Ovary (tissue), 10 donors: ENCODE measurements at regions of chr3 and their contacts with region 1.

Region 1: DNA sequence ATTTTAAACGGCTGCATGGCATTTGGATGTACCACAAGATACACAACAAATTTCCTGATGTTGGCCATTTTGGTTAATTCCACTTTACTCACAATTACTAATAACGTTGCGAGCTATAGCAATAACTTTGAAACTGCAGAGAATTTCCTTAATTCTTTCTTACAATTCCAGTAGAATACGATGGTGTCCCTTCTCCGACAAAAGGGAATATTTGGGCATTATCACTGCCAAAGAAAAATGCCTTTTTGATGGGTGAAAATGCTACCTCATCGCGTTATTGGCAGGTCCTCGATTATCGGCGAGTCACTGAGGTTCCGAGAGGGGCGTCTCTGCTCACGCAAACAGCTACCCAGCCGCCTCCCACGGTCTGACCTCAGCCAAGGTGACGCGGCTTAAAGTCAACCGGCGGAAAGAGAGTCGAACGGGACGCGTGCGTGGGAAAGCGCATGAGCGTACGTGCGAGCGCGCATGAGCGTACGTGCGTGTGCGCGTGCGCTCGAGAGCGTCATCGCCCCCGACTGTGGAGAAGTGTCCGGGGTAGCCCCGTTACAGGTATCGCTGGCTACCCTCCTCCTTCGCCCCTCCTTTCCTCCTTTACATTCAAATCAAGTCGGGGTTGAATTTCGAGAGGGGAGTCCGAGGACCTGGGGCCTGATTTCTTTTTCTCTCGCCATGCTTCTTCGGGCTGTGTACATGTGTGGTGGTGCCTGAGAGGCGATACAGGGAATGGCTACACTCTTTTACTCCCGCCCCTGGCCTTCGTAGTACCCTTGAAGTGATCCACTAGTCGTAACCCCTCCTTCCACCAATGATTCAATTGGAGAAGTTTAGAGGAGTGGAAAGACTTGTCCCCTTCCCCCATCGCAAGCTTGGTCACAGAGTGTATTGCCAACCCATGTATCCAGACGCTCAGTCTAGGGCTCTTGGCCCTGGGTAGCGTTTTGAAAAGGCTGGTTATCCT is at the start of gene OXSM:
- DNase-seq: peak; percentile 75 to 90 (median 82)
- H3K4me3 ChIP-seq: peak within 1 kb of the TSS; percentile 51
- H3K27ac ChIP-seq: peak within 1 kb of the TSS; percentile 5 to 68
- H3K4me1 ChIP-seq: peaks cover 2% of the 10 kb centered on the region
- H3K27me3 ChIP-seq: no peaks in the 10 kb centered on the region
- CTCF ChIP-seq: no peak
- EP300 ChIP-seq: peak; percentile 32
- POLR2A ChIP-seq: peak; percentile 38
- total RNA-seq, gene OXSM: 3.6 to 8.0 (median 6.6) TPM

Region 2: GRCh38 chr3:25664810-25665314 is 125.0 kb before region 1 on chr3 and contains the start of gene TOP2B:
- intact Hi-C with region 1: loop called in 2 of 4 experiments (anchors 10 kb)
- DNase-seq: peak; percentile 95 to 97 (median 96)
- H3K4me3 ChIP-seq: peak within 1 kb of the TSS; percentile 71
- H3K27ac ChIP-seq: peak within 1 kb of the TSS; percentile 98
- H3K4me1 ChIP-seq: no peaks in the 10 kb centered on the region
- H3K27me3 ChIP-seq: no peaks in the 10 kb centered on the region
- CTCF ChIP-seq: no peak
- EP300 ChIP-seq: no peak
- POLR2A ChIP-seq: peak; percentile 85
- total RNA-seq, gene TOP2B: 90.1 to 134 (median 109) TPM